ENCODE measurements at regions of chr15 and their contacts with region 1.

Region 1: GRCh38 chr15:67863442-67863987 is 23.7 kb upstream of the RNU6-1 start:
- DNase-seq: peak; percentile 91
- ATAC-seq: peak; percentile 98

Region 2: DNA sequence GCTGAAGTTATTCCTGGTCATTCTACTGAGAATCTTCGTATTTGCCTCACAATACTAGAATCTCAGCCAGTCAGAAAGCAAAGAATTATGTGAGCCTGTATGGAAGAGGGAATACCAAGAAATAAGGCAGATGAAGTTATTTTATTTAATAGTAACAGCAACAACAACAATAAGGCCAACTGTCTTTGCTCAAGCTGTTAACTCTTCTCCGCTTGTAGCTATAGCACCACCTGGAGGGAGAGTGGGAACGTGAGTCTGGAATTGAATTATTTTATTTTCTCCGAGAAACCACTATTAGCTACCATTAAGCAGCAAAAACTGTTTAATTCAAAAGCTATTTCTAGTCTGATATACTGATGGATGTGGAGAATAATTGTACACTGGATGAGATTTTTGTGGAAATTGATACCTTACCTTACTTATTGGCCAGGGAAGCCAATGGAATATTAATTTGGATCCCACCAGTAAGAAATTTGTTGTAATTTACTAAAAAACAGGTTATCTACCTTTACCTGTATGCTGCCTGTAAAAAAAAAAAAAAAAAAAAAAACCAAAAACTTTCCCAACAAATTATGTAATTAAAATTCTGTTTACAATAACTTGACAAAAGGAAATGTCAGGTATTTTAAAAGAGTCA is 291.5 kb after region 1 on chr15:
- intact Hi-C with region 1: loop called (anchors 5 kb)
- DNase-seq: no peak
- ATAC-seq: peak; percentile 71